IMR-90 (cell line): ENCODE measurements at regions of chr12 and their contacts with region 1.

Region 1: DNA sequence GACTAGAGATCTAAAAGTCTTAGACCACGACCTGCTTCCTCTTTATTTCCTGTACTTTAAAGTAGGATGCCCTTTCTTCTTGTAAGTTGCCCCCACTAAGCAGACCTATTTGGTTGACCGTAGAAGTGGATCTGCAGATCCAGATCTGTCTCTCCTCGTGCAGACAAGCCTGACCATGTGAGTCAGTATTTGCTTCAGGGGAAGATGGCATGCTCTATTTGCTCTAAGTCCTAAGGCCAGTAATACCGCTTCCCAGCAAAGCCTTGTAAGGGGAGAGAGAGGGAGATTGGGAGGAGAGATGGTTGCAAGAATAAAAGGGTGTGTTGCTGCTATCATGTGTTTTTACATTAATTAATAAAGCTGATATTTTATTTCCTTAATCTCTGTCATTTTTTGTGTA is 46.8 kb downstream of the KCNC2 start:
- DNase-seq: no peak
- ATAC-seq: no peak
- H3K4me3 ChIP-seq: no peak overlapping the region
- H3K27ac ChIP-seq: no peak overlapping the region
- H3K4me1 ChIP-seq: no peaks in the 10 kb centered on the region
- H3K27me3 ChIP-seq: peaks cover 2% of the 10 kb centered on the region; the same call in 1 of the 2 replicates
- CTCF ChIP-seq: no peak
- POLR2A ChIP-seq: no peak
- RAD21 ChIP-seq: no peak

Region 2: GRCh38 chr12:73906757-73907156 is 1256.1 kb before region 1 on chr12:
- CTCF ChIA-PET with region 1: no interaction called
- POLR2A ChIA-PET with region 1: no interaction called
- dilution Hi-C with region 1: no loop called
- in situ Hi-C with region 1: no loop called
- intact Hi-C with region 1: loop called (anchors 5 kb)
- DNase-seq: no peak
- ATAC-seq: no peak
- H3K4me3 ChIP-seq: no peak overlapping the region
- H3K27ac ChIP-seq: no peak overlapping the region
- H3K4me1 ChIP-seq: no peaks in the 10 kb centered on the region
- H3K27me3 ChIP-seq: no peaks in the 10 kb centered on the region
- CTCF ChIP-seq: no peak
- POLR2A ChIP-seq: no peak
- RAD21 ChIP-seq: no peak